Psoas muscle (tissue), 8 donors: ENCODE measurements at regions of chr1 and their contacts with region 1.

Region 1: GRCh38 chr1:32316903-32317277 is 19.1 kb downstream of the MARCKSL1 start:
- DNase-seq: no peak
- ATAC-seq: no peak
- H3K4me3 ChIP-seq: no peak overlapping the region
- H3K27ac ChIP-seq: no peak overlapping the region
- H3K4me1 ChIP-seq: no peaks in the 10 kb centered on the region
- H3K27me3 ChIP-seq: no peaks in the 10 kb centered on the region
- CTCF ChIP-seq: no peak

Region 2: DNA sequence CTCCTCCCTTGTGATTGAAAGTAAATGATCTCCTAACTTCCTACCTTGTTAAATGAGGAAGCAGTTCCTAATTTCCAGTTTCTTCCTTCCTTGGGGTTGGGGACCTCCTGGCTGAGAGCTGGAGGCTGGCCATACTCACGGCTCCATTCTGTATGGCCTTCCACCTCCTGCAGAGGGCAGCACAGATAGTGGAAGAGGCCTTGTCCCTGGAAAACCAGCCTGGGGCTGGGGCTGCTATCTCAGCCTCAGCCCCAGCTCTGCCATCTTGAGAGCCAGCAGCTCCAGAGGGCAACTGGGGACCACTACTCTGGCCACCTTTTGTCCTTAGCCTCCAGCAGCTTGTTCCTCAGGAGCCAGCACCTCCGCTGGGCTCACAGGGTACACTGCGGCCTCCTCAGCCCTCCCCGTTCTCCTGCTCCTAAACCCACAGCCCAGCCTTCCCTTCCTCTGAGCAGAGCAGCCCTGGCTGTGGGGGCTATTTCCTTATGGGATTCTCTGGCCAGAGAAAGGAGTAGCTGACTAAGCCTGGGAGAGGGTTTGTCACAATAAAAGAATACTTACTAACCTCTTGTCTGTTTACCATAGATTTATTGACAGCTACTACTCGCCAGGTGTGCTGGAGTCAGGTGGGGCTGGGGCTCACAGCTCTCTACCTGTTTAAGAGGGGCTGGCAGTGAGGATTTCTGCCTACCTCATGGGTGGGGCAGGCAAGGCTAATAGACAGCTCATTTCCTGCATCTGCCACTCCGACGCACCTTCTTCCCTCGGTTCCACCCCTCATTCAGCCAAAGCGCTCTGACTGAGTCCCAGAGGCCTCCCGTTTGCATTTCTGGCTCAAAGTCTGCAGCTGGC is 101.0 kb before region 1 on chr1:
- intact Hi-C with region 1: loop called (anchors 2 to 10 kb)
- DNase-seq: peak in 1 of 2 donors; percentile 68
- ATAC-seq: peak; percentile 78 to 89 (median 82)
- H3K4me3 ChIP-seq: no peak overlapping the region
- H3K27ac ChIP-seq: no peak overlapping the region
- H3K4me1 ChIP-seq: peaks cover 3% of the 10 kb centered on the region
- H3K27me3 ChIP-seq: no peaks in the 10 kb centered on the region
- CTCF ChIP-seq: peak; percentile 70

Region 3: DNA sequence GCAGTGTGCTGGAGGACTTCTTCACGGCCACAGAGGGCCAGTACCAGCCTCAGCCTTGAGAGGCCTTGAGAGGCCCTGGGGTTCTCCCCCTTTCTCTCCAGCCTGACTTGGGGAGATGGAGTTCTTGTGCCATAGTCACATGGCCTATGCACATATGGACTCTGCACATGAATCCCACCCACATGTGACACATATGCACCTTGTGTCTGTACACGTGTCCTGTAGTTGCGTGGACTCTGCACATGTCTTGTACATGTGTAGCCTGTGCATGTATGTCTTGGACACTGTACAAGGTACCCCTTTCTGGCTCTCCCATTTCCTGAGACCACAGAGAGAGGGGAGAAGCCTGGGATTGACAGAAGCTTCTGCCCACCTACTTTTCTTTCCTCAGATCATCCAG is 31.2 kb before region 1 on chr1:
- intact Hi-C with region 1: no loop called
- DNase-seq: no peak
- ATAC-seq: no peak
- H3K4me3 ChIP-seq: no peak overlapping the region
- H3K27ac ChIP-seq: no peak overlapping the region
- H3K4me1 ChIP-seq: no peaks in the 10 kb centered on the region
- H3K27me3 ChIP-seq: no peaks in the 10 kb centered on the region
- CTCF ChIP-seq: no peak